OCI-LY7 (cell line): ENCODE measurements at regions of chr5 and their contacts with region 1.

Region 1: DNA sequence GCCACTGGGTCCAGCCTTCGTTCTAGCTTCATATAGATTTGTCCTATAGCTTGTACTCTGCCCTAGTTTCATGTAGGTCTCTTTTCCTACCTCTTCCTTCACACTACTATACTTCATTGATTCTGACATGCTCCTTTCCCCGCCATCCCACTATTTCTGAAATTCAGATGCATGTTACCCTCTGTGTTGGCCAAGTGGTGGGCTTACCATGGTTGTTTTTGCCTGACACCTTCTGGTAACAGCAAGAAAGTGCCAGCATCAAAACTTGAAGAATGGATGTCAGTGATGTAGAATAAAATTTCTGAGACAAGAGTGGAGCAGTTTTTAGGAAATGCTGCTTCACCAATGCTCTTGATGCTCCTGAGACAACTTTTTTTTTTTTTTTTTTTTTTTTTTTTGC is 19.5 kb upstream of the SERINC5 start:
- DNase-seq: peak; percentile 70
- H3K4me3 ChIP-seq: no peak overlapping the region
- H3K27ac ChIP-seq: no peak overlapping the region
- H3K4me1 ChIP-seq: peaks cover 4% of the 10 kb centered on the region
- CTCF ChIP-seq: peak; percentile 92

Region 2: DNA sequence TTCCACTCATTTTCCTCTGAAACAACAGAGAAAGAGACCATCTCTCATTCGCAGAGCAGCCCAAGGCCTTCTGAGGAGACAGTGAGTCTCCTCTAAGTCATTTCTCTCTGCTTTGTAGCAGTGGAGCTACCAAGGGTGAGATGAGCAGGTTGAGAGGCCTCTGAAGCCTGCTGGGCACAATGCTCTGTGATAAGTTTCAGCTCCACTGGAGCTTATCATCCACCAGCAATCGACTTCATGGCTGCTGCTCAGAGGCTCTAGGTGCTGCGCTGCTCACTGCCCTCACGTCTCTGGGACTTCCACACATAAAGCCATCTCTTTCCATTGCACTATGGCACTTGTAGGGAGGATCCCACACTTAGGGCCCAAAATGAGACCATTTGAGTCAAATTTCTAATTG is 489.4 kb before region 1 on chr5:
- CTCF ChIA-PET with region 1: no interaction called
- POLR2A ChIA-PET with region 1: no interaction called
- intact Hi-C with region 1: no loop called
- DNase-seq: no peak
- H3K4me3 ChIP-seq: no peak overlapping the region
- H3K27ac ChIP-seq: no peak overlapping the region
- H3K4me1 ChIP-seq: no peaks in the 10 kb centered on the region
- CTCF ChIP-seq: no peak

Region 3: DNA sequence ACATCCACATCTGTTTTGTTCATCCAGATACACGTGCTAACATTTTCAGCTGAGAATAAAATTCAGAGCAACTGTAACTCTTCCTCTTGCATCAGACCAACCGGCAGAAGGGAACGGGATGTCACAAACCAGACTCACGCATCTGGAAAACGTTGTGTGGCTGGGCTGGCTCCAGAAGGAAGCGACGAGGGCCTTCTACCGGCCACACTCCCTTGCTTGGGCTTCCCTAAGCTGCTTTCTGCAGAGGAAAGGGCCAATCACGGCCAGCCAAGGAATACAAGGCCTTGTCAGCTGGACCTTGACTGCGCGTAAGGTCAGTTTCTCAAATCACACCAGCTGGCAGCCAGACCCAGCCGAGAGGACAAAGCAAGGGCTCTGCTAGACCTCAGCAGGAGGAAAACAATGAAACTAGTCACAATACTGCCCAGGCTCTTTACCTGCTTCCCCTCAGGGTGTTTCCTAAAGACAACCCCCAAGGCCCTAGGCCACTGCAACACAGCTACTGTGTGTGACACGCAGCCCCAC is 134.1 kb before region 1 on chr5:
- CTCF ChIA-PET with region 1: no interaction called
- POLR2A ChIA-PET with region 1: interaction called, 3 read pairs
- intact Hi-C with region 1: loop called (anchors 1 kb)
- DNase-seq: no peak
- H3K4me3 ChIP-seq: no peak overlapping the region
- H3K27ac ChIP-seq: peak overlapping the region; percentile 75
- H3K4me1 ChIP-seq: peaks cover 42% of the 10 kb centered on the region
- CTCF ChIP-seq: no peak

Region 4: DNA sequence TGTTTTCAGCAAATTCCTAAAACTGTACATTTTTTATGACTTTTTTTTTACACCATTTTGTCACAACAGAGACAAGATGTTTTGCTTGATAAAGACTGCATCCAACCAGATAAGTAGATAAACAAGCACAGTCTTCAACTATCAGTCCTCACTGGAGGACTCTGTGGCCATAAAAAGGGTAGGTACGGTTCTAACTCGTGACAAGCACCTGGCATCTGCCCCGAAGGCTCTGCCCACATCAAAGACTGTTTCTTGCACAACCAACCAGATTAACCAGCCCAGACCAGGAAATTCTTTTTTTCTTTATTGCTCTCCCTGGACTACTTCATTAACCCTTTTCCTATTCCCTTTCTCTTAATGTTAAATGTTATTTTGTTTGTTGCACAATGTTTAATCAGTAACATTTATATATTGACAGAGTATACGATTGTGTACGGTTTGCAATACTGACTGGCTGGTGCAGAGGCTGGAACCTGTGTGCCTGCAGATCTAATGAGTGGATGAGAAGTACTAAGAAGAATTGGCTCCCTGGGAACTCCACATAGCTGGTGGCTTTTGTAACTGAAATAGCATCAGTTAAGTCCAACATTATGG is 93.6 kb before region 1 on chr5:
- CTCF ChIA-PET with region 1: no interaction called
- POLR2A ChIA-PET with region 1: no interaction called
- intact Hi-C with region 1: no loop called
- DNase-seq: peak; percentile 95
- H3K4me3 ChIP-seq: peak overlapping the region; percentile 42
- H3K27ac ChIP-seq: peak overlapping the region; percentile 98
- H3K4me1 ChIP-seq: peaks cover 88% of the 10 kb centered on the region
- CTCF ChIP-seq: no peak

Region 5: DNA sequence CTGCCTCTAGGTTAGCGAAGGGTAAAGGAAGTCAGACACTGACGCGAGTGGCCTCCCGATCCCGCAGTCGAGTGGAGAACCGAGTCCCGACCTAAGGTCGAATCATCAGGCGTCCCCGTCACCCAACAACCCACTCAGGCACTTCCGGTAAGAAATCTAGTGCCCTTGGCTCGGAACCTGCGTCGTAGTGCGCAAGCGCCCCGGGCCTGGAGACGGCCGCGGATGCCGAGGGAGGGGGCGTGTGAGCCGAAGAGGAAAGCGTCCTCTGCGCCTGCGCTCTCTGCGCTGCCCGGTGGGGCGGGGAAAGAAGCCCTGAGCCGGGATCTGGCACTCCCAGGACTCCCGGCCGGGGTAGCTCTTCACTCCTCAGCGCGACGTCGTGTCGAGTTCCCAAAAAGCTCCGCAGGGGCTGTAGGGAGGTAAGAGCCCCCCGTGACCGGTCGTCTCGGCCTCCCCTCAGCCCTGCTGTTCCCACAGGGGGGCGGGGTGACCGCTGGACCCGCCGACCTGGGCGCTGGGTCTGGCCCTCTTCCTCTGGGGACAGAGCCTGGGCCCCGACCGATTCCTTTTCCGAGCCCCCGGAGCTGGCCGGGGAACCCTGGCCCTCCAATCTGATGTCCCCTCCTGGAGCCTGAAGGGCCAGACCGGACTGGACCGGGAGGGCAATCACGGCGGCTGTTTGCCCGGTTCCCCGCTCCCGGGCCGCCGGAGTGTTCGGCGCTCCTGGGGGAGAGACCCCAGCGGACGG is 132.6 kb after region 1 on chr5 and contains the start of gene ZFYVE16:
- CTCF ChIA-PET with region 1: no interaction called
- POLR2A ChIA-PET with region 1: no interaction called
- intact Hi-C with region 1: no loop called
- DNase-seq: peak; percentile 97
- H3K4me3 ChIP-seq: peak within 1 kb of the TSS; percentile 99
- H3K27ac ChIP-seq: peak within 1 kb of the TSS; percentile 56
- H3K4me1 ChIP-seq: peaks cover 12% of the 10 kb centered on the region
- CTCF ChIP-seq: 0 out of 2 replicates have a peak, but pooled peaks have one; percentile 21
- total RNA-seq, gene ZFYVE16: 8.0 and 8.7 TPM in 2 replicates

Region 6: DNA sequence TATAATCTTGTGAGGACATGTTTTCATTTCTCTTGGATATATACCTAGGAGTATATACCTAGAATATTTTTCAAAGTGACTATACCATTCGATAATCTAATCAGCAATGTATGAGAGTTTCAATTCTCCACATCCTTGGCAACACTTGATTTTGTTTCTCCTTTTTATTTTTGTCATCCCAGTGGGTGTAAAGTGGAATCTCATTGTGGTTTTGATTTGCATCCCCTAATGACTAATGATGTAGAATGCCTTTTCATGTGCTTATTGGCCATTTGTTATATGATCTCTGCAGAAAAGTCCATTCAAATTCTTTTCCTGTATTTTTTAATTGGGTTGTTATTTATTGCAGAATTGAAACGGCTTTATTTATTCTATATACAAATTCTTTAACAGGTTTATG is 1041.2 kb after region 1 on chr5:
- CTCF ChIA-PET with region 1: no interaction called
- POLR2A ChIA-PET with region 1: no interaction called
- intact Hi-C with region 1: no loop called
- DNase-seq: no peak
- H3K4me3 ChIP-seq: no peak overlapping the region
- H3K27ac ChIP-seq: no peak overlapping the region
- H3K4me1 ChIP-seq: no peaks in the 10 kb centered on the region
- CTCF ChIP-seq: no peak